Colonic mucosa (tissue), 4 donors: ENCODE measurements at regions of chr7 and their contacts with region 1.

Region 1: GRCh38 chr7:129825496-129826267 is 127.1 kb downstream of the UBE2H start:
- DNase-seq: peak; percentile 94
- H3K4me3 ChIP-seq: peak overlapping the region; percentile 65
- H3K27ac ChIP-seq: no peak overlapping the region
- H3K4me1 ChIP-seq: peaks cover 11% of the 10 kb centered on the region
- H3K27me3 ChIP-seq: no peaks in the 10 kb centered on the region
- CTCF ChIP-seq: peak; percentile 98

Region 2: GRCh38 chr7:129367700-129368388 is 457.8 kb before region 1 on chr7:
- intact Hi-C with region 1: loop called (anchors 10 kb)
- DNase-seq: peak; percentile 91
- H3K4me3 ChIP-seq: peak overlapping the region; percentile 18
- H3K27ac ChIP-seq: peak overlapping the region; percentile 80
- H3K4me1 ChIP-seq: no peaks in the 10 kb centered on the region
- H3K27me3 ChIP-seq: no peaks in the 10 kb centered on the region
- CTCF ChIP-seq: peak; percentile 89

Region 3: DNA sequence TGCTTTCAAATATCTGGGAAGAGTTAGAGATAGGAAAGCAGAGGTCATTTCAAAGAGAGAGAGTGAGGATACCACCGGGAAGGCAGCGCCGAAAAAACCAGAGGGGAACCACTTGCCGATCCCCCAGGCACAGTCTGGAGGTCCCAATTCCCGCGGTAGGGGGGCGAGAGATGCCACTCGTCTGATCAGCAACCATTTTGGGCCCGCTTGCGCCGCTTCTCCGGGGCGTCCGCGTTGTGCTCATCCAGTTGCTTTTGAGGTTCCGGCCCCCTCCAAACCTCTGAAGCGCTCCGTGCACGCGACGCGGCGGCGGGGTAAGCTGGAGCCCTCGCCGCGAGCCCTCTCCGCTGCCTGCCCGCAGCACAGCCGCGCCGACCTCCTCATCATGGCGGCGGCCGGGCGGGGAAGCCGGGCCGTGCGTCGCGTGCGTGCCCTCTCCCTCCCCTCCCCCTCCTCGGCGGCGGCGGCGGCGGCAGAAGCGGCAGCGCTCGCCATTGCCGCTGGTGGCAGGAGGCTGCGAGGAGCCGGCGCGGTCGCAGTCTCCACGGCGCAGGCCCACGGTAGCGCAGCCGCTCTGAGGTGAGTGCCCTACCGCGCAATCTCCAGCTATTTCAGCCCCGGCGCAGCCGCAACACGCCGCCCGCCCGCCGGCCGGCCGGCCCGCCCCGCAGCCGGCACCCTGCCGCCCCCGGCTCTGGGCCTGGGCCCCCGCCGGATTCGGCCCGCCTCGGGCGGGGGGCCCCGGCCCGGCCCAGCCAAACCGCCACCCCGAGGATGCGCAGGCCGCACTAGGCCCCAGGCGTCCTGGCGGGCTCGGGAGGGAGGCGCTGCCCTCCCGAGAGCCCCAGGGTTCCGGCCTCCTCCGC is 214.2 kb before region 1 on chr7 and contains the start of gene NRF1:
- intact Hi-C with region 1: loop called (anchors 5 kb)
- DNase-seq: peak; percentile 86
- H3K4me3 ChIP-seq: peak within 1 kb of the TSS; percentile 66
- H3K27ac ChIP-seq: peak within 1 kb of the TSS; percentile 87
- H3K4me1 ChIP-seq: no peaks in the 10 kb centered on the region
- H3K27me3 ChIP-seq: no peaks in the 10 kb centered on the region
- CTCF ChIP-seq: no peak
- total RNA-seq, gene NRF1: 13.4 to 15.7 TPM

Region 4: GRCh38 chr7:129644634-129645230 is 180.9 kb before region 1 on chr7:
- intact Hi-C with region 1: no loop called
- DNase-seq: no peak
- H3K4me3 ChIP-seq: no peak overlapping the region
- H3K27ac ChIP-seq: no peak overlapping the region
- H3K4me1 ChIP-seq: no peaks in the 10 kb centered on the region
- H3K27me3 ChIP-seq: no peaks in the 10 kb centered on the region
- CTCF ChIP-seq: peak; percentile 17

Region 5: GRCh38 chr7:129664029-129665012 is 161.4 kb before region 1 on chr7:
- intact Hi-C with region 1: loop called (anchors 2 kb)
- DNase-seq: no peak
- H3K4me3 ChIP-seq: no peak overlapping the region
- H3K27ac ChIP-seq: no peak overlapping the region
- H3K4me1 ChIP-seq: no peaks in the 10 kb centered on the region
- H3K27me3 ChIP-seq: no peaks in the 10 kb centered on the region
- CTCF ChIP-seq: peak; percentile 44

Region 6: DNA sequence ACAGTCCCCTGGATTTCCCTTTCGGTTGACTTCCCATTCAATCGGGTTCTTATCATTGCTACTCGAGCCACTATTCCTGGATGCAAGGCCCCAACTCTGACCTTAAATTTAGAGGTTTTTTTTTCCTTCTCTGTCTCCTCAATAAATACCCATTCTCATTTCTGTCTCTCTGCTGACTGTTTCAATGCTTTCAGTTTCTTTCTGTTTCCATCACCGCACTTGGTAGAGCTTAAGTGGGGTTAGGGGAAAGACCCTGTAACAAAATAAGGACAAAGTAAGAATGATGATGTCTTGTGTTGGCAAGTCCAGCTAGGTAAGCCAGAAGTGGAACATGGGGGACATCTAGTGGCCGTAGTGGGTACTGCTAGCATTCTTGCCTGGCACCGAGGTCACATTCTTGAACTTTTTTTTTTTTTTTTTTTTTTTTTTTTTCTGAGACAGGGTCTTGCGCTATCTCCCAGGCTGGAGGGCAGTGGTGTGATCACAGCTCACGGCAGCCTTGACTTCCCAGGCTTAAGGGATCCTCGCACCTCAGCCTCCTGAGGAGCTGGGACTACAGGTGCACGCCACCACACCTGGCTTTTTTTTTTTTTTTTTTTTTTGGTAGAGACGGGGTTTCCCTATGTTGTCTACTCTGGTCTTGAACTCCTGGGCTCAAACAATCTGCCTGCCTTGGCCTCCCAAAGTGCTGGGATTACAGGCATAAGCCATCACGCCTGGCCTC is 185.2 kb after region 1 on chr7:
- intact Hi-C with region 1: loop called (anchors 2 kb)
- DNase-seq: peak; percentile 87
- H3K4me3 ChIP-seq: no peak overlapping the region
- H3K27ac ChIP-seq: no peak overlapping the region
- H3K4me1 ChIP-seq: no peaks in the 10 kb centered on the region
- H3K27me3 ChIP-seq: no peaks in the 10 kb centered on the region
- CTCF ChIP-seq: peak; percentile 94